ENCODE measurements at regions of chr6 and their contacts with region 1.

Region 1: GRCh38 chr6:30013291-30013922 is 47.7 kb upstream of the POLR1H start:
- DNase-seq: peak in 7 of 9 experiments; percentile 17 to 58 (median 52)
- ATAC-seq: no peak
- H3K4me3 ChIP-seq: no peak overlapping the region
- H3K4me3 Mint-ChIP-seq: no peak overlapping the region
- H3K27ac ChIP-seq: no peak overlapping the region
- H3K27ac Mint-ChIP-seq: no peak overlapping the region
- H3K4me1 ChIP-seq: no peaks in the 10 kb centered on the region
- H3K4me1 Mint-ChIP-seq: no peaks in the 10 kb centered on the region
- H3K27me3 ChIP-seq: peaks cover 0 to 2% of the 10 kb centered on the region in 2 experiments
- H3K27me3 Mint-ChIP-seq: no peaks in the 10 kb centered on the region
- CTCF ChIP-seq: no peak

Region 2: GRCh38 chr6:29847871-29848630 is 165.4 kb before region 1 on chr6:
- CTCF ChIA-PET with region 1: interaction called, 76 read pairs
- POLR2A ChIA-PET with region 1: no interaction called
- intact Hi-C with region 1: loop called (anchors 1 kb)
- DNase-seq: peak; percentile 74 to 94 (median 85)
- ATAC-seq: peak; percentile 86
- H3K4me3 ChIP-seq: no peak overlapping the region
- H3K4me3 Mint-ChIP-seq: no peak overlapping the region
- H3K27ac ChIP-seq: no peak overlapping the region
- H3K27ac Mint-ChIP-seq: no peak overlapping the region
- H3K4me1 ChIP-seq: peaks cover 3% of the 10 kb centered on the region
- H3K4me1 Mint-ChIP-seq: peaks cover 8% of the 10 kb centered on the region
- H3K27me3 ChIP-seq: peaks cover 11 to 23% of the 10 kb centered on the region in 2 experiments
- H3K27me3 Mint-ChIP-seq: peaks cover 58% of the 10 kb centered on the region
- CTCF ChIP-seq: peak; percentile 97

Region 3: GRCh38 chr6:29942275-29943052 is 70.9 kb before region 1 on chr6 and contains the start of gene HLA-A:
- CTCF ChIA-PET with region 1: no interaction called
- POLR2A ChIA-PET with region 1: no interaction called
- intact Hi-C with region 1: no loop called
- DNase-seq: peak; percentile 86 to 98 (median 94)
- ATAC-seq: peak; percentile 84
- H3K4me3 ChIP-seq: peak within 1 kb of the TSS; percentile 75 to 82
- H3K4me3 Mint-ChIP-seq: peak within 1 kb of the TSS; percentile 94
- H3K27ac ChIP-seq: peak within 1 kb of the TSS; percentile 99 to 100
- H3K27ac Mint-ChIP-seq: peak within 1 kb of the TSS; percentile 100
- H3K4me1 ChIP-seq: peaks cover 49% of the 10 kb centered on the region
- H3K4me1 Mint-ChIP-seq: peaks cover 48% of the 10 kb centered on the region
- H3K27me3 ChIP-seq: no peaks in the 10 kb centered on the region
- H3K27me3 Mint-ChIP-seq: no peaks in the 10 kb centered on the region
- CTCF ChIP-seq: no peak
- total RNA-seq, gene HLA-A: 2,151 to 2,183 TPM

Region 4: GRCh38 chr6:30025186-30025585 is 11.8 kb after region 1 on chr6:
- CTCF ChIA-PET with region 1: interaction called, 11 read pairs
- POLR2A ChIA-PET with region 1: no interaction called
- intact Hi-C with region 1: no loop called
- DNase-seq: no peak
- ATAC-seq: no peak
- H3K4me3 ChIP-seq: no peak overlapping the region
- H3K4me3 Mint-ChIP-seq: no peak overlapping the region
- H3K27ac ChIP-seq: no peak overlapping the region
- H3K27ac Mint-ChIP-seq: no peak overlapping the region
- H3K4me1 ChIP-seq: no peaks in the 10 kb centered on the region
- H3K4me1 Mint-ChIP-seq: peaks cover 3% of the 10 kb centered on the region
- H3K27me3 ChIP-seq: no peaks in the 10 kb centered on the region
- H3K27me3 Mint-ChIP-seq: no peaks in the 10 kb centered on the region
- CTCF ChIP-seq: no peak